HepG2 (cell line): ENCODE measurements at regions of chr5 and their contacts with region 1.

Region 1: DNA sequence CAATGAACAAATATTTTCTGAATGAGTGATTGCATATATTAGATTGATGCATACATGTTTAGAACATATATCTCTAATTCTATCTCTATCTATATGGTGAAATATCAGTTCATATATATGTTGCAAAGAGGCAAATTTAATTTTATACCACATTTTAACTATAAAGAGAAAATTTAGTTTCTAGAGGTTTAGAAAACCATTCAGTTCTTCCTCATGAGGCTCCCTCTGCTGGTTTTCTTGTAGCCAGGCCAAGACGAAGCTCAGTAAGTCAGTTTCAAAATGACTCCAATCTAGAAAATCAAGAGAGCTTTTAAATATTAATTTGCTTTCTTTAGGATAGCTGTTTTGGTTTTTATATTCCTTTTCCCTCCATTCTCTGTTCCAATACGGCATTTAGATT is 312.1 kb downstream of the TMEM232 start:
- DNase-seq: peak; percentile 8
- ATAC-seq: no peak
- H3K4me3 ChIP-seq: no peak overlapping the region
- H3K27ac ChIP-seq: no peak overlapping the region
- H3K4me1 ChIP-seq: no peaks in the 10 kb centered on the region
- H3K27me3 ChIP-seq: no peaks in the 10 kb centered on the region
- CTCF ChIP-seq: peak; percentile 20; the same call in 1 of the 2 replicates
- EP300 ChIP-seq: no peak
- POLR2A ChIP-seq: no peak
- RAD21 ChIP-seq: no peak

Region 2: DNA sequence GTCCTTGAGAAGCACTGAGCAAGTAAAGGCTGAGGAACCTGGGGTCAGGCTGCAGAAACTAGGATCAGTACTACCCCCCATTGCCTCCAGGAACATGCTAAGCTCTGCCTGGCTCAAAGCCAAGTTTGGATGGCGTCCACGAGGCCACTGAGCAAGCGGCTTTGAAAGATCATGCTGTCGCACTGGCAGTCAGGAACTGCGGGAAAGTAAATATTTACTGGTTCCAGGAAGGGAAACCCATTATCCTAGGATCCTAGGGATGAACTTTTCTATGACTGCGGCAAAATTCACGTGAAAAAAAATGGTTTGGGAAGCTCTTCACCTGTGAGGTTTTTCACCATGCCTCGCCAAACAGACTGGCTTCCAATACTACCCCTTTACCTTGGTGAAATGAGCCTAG is 929.3 kb before region 1 on chr5:
- CTCF ChIA-PET with region 1: no interaction called
- POLR2A ChIA-PET with region 1: no interaction called
- in situ Hi-C with region 1: no loop called
- intact Hi-C with region 1: loop called (anchors 5 kb)
- DNase-seq: peak; percentile 92
- ATAC-seq: peak; percentile 97
- H3K4me3 ChIP-seq: peak overlapping the region in 2 of 3 experiments; percentile 4 to 20; a peak in 2 of 6 replicates
- H3K27ac ChIP-seq: peak overlapping the region; percentile 12
- H3K4me1 ChIP-seq: peaks cover 41% of the 10 kb centered on the region
- H3K27me3 ChIP-seq: no peaks in the 10 kb centered on the region
- CTCF ChIP-seq: no peak
- EP300 ChIP-seq: peak in 1 of 2 experiments; percentile 85; a peak in 2 of 4 replicates
- POLR2A ChIP-seq: no peak
- RAD21 ChIP-seq: no peak